Colonic mucosa (tissue), 4 donors: ENCODE measurements at regions of chr2 and their contacts with region 1.

Region 1: GRCh38 chr2:164560181-164560792 is 61.0 kb downstream of the GRB14 start:
- DNase-seq: no peak
- H3K4me3 ChIP-seq: no peak overlapping the region
- H3K27ac ChIP-seq: no peak overlapping the region
- H3K4me1 ChIP-seq: no peaks in the 10 kb centered on the region
- H3K27me3 ChIP-seq: no peaks in the 10 kb centered on the region
- CTCF ChIP-seq: peak; percentile 75

Region 2: GRCh38 chr2:164717000-164717803 is 156.9 kb after region 1 on chr2:
- intact Hi-C with region 1: loop called (anchors 5 kb)
- DNase-seq: no peak
- H3K4me3 ChIP-seq: no peak overlapping the region
- H3K27ac ChIP-seq: no peak overlapping the region
- H3K4me1 ChIP-seq: no peaks in the 10 kb centered on the region
- H3K27me3 ChIP-seq: no peaks in the 10 kb centered on the region
- CTCF ChIP-seq: peak; percentile 51